Activated naive CD8-positive, alpha-beta T cell treated with anti-CD3 and anti-CD28 coated beads, Interleukin-2, amount 10 ng/mL, durations not matched to agents 7 days and 5 days (primary cell): ENCODE measurements at regions of chr10 and their contacts with region 1.

Region 1: DNA sequence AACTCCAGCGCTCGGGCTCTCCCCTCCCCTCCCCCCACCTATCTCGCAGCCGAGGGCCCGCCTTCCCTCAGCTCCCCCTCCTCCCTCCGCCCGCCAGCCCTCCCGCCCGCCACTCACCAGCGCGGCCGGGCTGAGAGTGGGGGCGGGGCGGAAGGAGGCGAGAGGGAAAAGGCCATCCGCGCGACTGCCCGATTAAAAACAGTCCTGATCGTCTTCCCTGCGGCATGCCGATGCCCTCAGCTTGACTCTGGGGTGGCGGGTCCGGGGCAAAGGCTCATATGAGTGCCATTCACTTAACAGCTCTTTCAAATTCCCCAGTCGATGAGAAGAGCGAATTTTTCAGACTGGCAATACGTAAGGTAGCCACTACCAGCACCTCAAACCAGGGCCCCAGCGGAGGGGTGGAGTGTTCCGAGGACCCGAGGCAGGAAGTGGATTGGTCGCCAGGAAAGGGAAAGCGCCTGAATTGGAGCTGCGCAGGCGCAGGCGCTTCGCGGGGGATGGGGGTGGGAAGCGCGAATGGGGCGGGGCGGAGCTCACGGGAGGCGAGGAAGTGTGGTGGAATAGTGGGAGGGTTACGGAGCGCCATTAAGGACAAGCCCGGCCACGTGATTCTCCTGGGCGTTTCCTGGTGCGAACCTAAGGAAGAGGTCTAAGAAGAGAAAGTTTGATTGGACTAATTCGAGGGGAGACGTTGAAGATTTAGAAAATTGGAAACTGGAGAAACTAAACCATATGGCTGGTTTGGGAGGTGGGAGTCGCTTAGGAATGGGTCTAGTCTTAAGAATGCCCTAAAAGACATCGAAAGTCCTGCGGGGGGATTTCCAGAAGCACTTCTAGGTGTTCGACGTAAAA is at the start of gene UPF2:
- DNase-seq: peak; percentile 95
- ATAC-seq: peak; percentile 88
- H3K4me3 Mint-ChIP-seq: peak within 1 kb of the TSS; percentile 95
- H3K27ac Mint-ChIP-seq: peak within 1 kb of the TSS; percentile 100
- H3K4me1 Mint-ChIP-seq: peaks cover 25% of the 10 kb centered on the region
- H3K27me3 Mint-ChIP-seq: peaks cover 8% of the 10 kb centered on the region
- total RNA-seq, gene UPF2: 30.4 to 31.0 TPM

Region 2: DNA sequence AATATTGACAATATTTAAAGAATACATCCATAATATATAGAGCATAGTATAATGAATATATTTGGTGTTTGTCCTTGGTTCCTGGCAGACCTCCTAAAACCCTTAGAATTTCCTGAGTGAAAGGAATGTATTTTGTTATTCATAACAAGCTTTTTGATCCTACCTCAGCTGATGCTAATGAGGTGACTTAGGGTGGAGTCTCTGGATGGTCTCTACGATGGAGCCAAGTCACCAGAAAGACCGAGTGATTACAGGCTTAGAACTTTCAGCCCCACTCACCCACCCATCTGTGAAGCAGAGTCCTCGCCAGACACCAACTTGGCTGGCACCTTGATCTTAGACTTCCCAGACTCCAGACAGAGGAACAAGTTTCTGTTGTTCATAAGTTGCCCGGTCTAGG is 36.4 kb before region 1 on chr10:
- POLR2A ChIA-PET with region 1: no interaction called
- DNase-seq: no peak
- ATAC-seq: no peak
- H3K4me3 Mint-ChIP-seq: no peak overlapping the region
- H3K27ac Mint-ChIP-seq: no peak overlapping the region
- H3K4me1 Mint-ChIP-seq: peaks cover 1% of the 10 kb centered on the region
- H3K27me3 Mint-ChIP-seq: no peaks in the 10 kb centered on the region

Region 3: DNA sequence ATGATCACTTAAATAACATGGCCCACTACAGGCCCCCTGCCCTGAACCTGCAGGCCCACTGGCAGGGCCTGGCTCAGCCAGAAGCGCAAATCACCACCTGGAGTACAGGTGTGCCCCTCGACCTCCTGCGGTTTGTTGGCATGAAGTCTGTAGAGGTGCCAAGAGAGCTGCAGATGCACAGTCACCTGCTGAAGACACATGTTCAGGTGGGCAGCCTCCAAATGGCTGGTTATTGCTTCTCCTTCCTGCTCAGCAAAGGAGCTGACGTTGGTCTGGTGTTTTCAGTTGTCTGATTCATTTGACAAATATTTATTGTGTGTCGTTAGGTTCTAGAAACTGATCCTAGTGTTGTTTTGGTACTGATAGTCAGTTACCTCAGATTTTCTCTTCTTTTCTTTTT is 54.8 kb after region 1 on chr10:
- POLR2A ChIA-PET with region 1: no interaction called
- DNase-seq: no peak
- ATAC-seq: no peak
- H3K4me3 Mint-ChIP-seq: no peak overlapping the region
- H3K27ac Mint-ChIP-seq: no peak overlapping the region
- H3K4me1 Mint-ChIP-seq: no peaks in the 10 kb centered on the region
- H3K27me3 Mint-ChIP-seq: no peaks in the 10 kb centered on the region

Region 4: GRCh38 chr10:12195603-12196506 is 152.8 kb after region 1 on chr10 and contains the starts of genes CDC123 and NUDT5:
- POLR2A ChIA-PET with region 1: interaction called, 20 read pairs
- DNase-seq: peak; percentile 84
- ATAC-seq: peak; percentile 95
- H3K4me3 Mint-ChIP-seq: peak within 1 kb of the TSS; percentile 92
- H3K27ac Mint-ChIP-seq: peak within 1 kb of the TSS; percentile 92
- H3K4me1 Mint-ChIP-seq: peaks cover 31% of the 10 kb centered on the region
- H3K27me3 Mint-ChIP-seq: no peaks in the 10 kb centered on the region
- total RNA-seq, gene CDC123: 56.7 to 69.2 TPM
- total RNA-seq, gene NUDT5: 71.4 to 74.8 TPM